WTC11 (cell line): ENCODE measurements at regions of chr16 and their contacts with region 1.

Region 1: GRCh38 chr16:67428146-67428731 is 2.7 kb upstream of the HSD11B2 start:
- DNase-seq: peak; percentile 91
- ATAC-seq: peak; percentile 67
- H3K4me3 Mint-ChIP-seq: no peak overlapping the region
- H3K27ac Mint-ChIP-seq: no peak overlapping the region
- H3K4me1 Mint-ChIP-seq: peaks cover 77% of the 10 kb centered on the region
- H3K27me3 Mint-ChIP-seq: peaks cover 12% of the 10 kb centered on the region
- CTCF ChIP-seq: peak; percentile 80

Region 2: DNA sequence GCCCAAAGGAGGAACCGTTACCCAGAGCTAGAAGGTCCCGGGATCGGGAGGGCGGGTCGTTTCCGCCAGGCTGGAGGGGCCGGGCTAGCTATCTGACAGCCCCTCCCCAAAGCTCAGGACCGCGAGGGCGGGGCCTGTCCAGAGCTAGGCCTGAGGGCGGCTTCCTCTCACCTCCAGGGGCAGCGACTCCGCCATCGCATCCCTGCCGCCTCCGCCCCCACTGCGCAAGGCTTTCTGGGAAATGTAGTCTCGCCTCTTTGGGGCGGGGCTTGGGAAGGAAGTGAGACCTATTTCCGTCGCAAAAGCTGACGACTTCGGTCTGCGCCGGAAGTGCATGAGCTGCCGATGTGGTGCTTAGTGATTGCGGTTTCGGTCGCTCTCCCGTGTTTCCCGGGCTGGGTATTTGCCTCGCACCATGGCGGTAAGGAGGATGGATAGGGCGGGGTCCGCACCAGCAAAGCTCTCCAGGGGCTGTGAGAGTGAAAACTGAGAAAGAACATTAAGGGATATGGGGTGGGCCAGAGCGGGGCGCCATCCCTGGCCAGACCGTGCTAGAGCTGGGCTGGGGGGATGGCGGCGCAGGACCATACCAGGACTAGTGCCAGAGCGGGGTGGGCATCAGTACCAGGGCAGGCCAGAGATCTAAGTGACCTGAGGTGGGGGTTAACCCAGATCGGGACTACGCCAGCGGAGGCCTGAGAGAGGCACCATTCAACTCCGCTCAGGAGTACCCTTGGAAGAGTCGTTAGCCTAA is 201.3 kb before region 1 on chr16 and contains the start of gene TMEM208:
- CTCF ChIA-PET with region 1: no interaction called
- POLR2A ChIA-PET with region 1: no interaction called
- DNase-seq: peak; percentile 100
- ATAC-seq: peak; percentile 99
- H3K4me3 Mint-ChIP-seq: peak within 1 kb of the TSS; percentile 97
- H3K27ac Mint-ChIP-seq: peak within 1 kb of the TSS; percentile 98
- H3K4me1 Mint-ChIP-seq: peaks cover 15% of the 10 kb centered on the region
- H3K27me3 Mint-ChIP-seq: peaks cover 28% of the 10 kb centered on the region
- CTCF ChIP-seq: no peak
- total RNA-seq, gene TMEM208: 37.4 to 48.4 TPM (median 43.1 TPM) in 3 replicates

Region 3: GRCh38 chr16:67326472-67327309 is 101.5 kb before region 1 on chr16 and contains the starts of genes KCTD19 and LRRC36:
- CTCF ChIA-PET with region 1: interaction called, 12 read pairs
- POLR2A ChIA-PET with region 1: no interaction called
- DNase-seq: peak; percentile 98
- ATAC-seq: peak; percentile 99
- H3K4me3 Mint-ChIP-seq: peak within 1 kb of the TSS; percentile 83
- H3K27ac Mint-ChIP-seq: no peak within 1 kb of the TSS
- H3K4me1 Mint-ChIP-seq: peaks cover 3% of the 10 kb centered on the region
- H3K27me3 Mint-ChIP-seq: peaks cover 56% of the 10 kb centered on the region
- CTCF ChIP-seq: peak; percentile 49
- total RNA-seq, gene KCTD19: 0.85 to 1.1 TPM (median 0.85 TPM) in 3 replicates
- total RNA-seq, gene LRRC36: 0.13 to 0.39 TPM (median 0.18 TPM) in 3 replicates

Region 4: GRCh38 chr16:67406111-67406890 is 21.9 kb before region 1 on chr16:
- CTCF ChIA-PET with region 1: interaction called, 21 read pairs
- POLR2A ChIA-PET with region 1: no interaction called
- DNase-seq: no peak
- ATAC-seq: no peak
- H3K4me3 Mint-ChIP-seq: no peak overlapping the region
- H3K27ac Mint-ChIP-seq: no peak overlapping the region
- H3K4me1 Mint-ChIP-seq: peaks cover 39% of the 10 kb centered on the region
- H3K27me3 Mint-ChIP-seq: peaks cover 23% of the 10 kb centered on the region
- CTCF ChIP-seq: no peak

Region 5: DNA sequence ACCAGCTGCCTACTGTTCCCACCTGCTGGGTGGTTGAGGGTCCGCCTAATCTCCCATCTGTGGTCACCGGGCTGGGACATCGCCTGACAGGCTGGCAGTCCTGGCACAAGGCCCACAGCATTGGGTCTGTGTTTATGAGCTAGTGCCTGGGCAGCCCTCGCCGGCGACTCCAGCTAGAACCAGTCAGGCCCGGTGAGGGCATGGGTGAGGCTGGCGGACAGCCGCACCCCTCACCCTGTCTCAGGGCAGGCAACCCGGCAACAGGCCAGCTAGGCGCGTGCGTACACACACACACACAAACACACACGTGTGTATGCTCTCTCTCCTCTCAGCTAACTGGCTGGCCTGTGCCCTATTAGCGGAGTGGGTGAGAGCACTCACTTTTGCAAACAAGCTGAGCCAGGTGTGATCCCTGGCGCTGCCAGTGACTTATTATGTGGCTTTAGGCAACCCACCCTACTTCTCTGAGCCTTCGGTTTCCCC is 13.1 kb after region 1 on chr16:
- CTCF ChIA-PET with region 1: interaction called, 234 read pairs
- POLR2A ChIA-PET with region 1: interaction called, 5 read pairs
- DNase-seq: no peak
- ATAC-seq: no peak
- H3K4me3 Mint-ChIP-seq: no peak overlapping the region
- H3K27ac Mint-ChIP-seq: no peak overlapping the region
- H3K4me1 Mint-ChIP-seq: peaks cover 6% of the 10 kb centered on the region
- H3K27me3 Mint-ChIP-seq: no peaks in the 10 kb centered on the region
- CTCF ChIP-seq: no peak

Region 6: GRCh38 chr16:67456391-67457081 is 28.3 kb after region 1 on chr16:
- CTCF ChIA-PET with region 1: interaction called, 234 read pairs
- POLR2A ChIA-PET with region 1: no interaction called
- DNase-seq: peak; percentile 61
- ATAC-seq: peak; percentile 83
- H3K4me3 Mint-ChIP-seq: no peak overlapping the region
- H3K27ac Mint-ChIP-seq: peak overlapping the region; percentile 46; the same call in 1 of the 2 replicates
- H3K4me1 Mint-ChIP-seq: 0 out of 2 replicates have a peak, but pooled peaks cover 5% of the 10 kb centered on the region
- H3K27me3 Mint-ChIP-seq: no peaks in the 10 kb centered on the region
- CTCF ChIP-seq: peak; percentile 44

Region 7: GRCh38 chr16:67470359-67470758 is 42.1 kb after region 1 on chr16:
- CTCF ChIA-PET with region 1: interaction called, 48 read pairs
- POLR2A ChIA-PET with region 1: no interaction called
- DNase-seq: no peak
- ATAC-seq: no peak
- H3K4me3 Mint-ChIP-seq: no peak overlapping the region
- H3K27ac Mint-ChIP-seq: no peak overlapping the region
- H3K4me1 Mint-ChIP-seq: peaks cover 3% of the 10 kb centered on the region
- H3K27me3 Mint-ChIP-seq: no peaks in the 10 kb centered on the region; the same call in 1 of the 2 replicates
- CTCF ChIP-seq: no peak